Ascending aorta (tissue), 2 donors: ENCODE measurements at regions of chr7 and their contacts with region 1.

Region 1: DNA sequence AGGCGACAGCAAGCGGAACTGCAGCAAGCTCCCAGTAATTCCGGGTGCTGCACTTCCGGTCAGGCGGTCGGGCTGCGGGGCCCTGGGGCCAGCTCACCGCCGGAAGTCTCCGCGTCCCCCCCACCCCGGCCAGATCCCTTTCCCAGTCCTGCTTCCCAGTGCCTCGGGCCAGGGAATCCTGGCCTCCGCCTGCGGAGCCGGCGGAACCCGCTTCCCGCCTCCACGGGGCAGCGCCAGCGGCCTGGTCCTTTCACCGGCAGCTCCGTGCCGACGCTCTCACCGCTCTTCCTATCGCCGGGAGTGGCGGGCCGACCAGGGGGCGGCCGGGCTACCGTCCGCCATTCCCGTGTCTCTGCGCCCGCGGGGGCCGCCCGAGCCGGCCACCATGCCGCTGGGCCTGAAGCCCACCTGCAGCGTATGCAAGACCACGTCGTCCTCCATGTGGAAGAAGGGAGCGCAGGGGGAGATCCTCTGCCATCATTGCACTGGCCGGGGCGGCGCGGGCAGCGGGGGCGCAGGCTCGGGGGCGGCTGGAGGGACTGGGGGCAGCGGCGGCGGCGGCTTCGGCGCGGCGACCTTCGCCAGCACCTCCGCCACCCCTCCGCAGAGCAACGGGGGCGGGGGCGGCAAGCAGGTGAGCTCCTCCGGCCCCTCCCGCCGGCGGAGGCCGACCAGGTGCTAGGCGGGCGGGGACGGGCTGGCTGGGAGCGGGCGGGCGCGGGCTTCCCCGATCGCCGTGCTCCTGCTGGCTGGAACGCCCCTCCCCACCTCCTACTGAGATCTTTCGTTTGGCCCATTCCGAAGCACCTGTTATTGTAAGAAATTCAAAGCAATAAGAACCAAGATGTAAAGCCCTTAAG is at the start of gene GATAD1:
- DNase-seq: peak; percentile 62 to 93
- H3K4me3 ChIP-seq: peak within 1 kb of the TSS; percentile 92 to 98
- H3K27ac ChIP-seq: peak within 1 kb of the TSS; percentile 95 to 97
- H3K4me1 ChIP-seq: no peaks in the 10 kb centered on the region
- H3K27me3 ChIP-seq: no peaks in the 10 kb centered on the region
- CTCF ChIP-seq: peak; percentile 91 to 96 (median 92)
- total RNA-seq, gene GATAD1: 20.4 TPM

Region 2: GRCh38 chr7:92134271-92135051 is 313.1 kb before region 1 on chr7 and contains the start of gene CYP51A1:
- intact Hi-C with region 1: loop called (anchors 1 kb)
- DNase-seq: peak; percentile 77 to 97
- H3K4me3 ChIP-seq: peak within 1 kb of the TSS; percentile 67 to 88
- H3K27ac ChIP-seq: peak within 1 kb of the TSS; percentile 92 to 93
- H3K4me1 ChIP-seq: peaks cover 0 to 10% of the 10 kb centered on the region in 2 donors
- H3K27me3 ChIP-seq: no peaks in the 10 kb centered on the region
- CTCF ChIP-seq: no peak
- total RNA-seq, gene CYP51A1: 19.9 TPM

Region 3: DNA sequence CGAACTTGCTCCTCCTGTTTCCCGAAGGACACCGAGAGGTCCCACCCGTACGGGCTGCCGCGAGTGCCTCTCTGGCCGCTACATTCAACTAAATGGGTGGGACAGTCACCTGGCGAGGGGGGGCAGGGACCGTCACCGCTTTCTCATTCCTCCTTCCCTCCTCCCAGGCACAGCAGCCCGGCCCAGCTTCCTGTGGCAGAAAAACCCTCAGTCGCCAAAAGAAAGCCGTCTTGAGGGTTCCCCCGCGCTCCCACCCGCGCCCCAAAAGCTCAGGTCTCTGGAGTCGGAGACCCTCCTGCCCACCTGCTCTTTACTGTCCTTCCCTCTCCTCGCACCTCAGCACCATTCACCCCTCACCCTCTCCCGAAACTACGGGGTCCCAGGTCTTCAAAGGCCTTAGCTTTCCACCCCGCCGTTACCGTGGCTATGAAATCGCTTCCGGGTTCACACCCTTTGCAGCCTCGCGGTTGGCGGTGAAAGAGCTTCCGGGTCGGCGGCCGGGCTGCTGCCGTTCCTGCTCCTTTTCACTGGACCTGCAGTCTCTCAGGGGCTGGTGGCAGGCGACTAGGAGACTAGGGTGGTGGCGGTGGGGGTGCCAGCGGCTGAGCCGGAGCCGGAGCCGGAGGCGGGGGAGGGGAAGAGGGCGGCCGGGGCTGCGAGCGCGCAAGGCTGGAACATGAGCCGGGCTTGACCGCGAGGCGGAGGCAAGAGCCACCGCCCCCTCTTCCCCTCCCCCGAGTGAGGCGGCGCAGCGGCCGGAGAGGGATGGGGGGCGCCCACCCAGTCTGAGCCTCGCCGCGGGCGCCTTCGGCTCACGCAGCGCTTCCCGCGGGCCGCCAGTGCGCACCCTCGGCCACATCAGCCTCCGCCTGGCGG is 201.8 kb before region 1 on chr7 and contains the starts of genes ANKIB1 and KRIT1:
- intact Hi-C with region 1: loop called (anchors 2 kb)
- DNase-seq: peak; percentile 36 to 94
- H3K4me3 ChIP-seq: peak within 1 kb of the TSS; percentile 80 to 99
- H3K27ac ChIP-seq: peak within 1 kb of the TSS; percentile 90 to 94
- H3K4me1 ChIP-seq: peaks cover 0 to 25% of the 10 kb centered on the region in 2 donors
- H3K27me3 ChIP-seq: no peaks in the 10 kb centered on the region
- CTCF ChIP-seq: peak in 2 of 3 experiments; percentile 4 to 14
- total RNA-seq, gene ANKIB1: 27.4 TPM
- total RNA-seq, gene KRIT1: 66.1 TPM

Region 4: DNA sequence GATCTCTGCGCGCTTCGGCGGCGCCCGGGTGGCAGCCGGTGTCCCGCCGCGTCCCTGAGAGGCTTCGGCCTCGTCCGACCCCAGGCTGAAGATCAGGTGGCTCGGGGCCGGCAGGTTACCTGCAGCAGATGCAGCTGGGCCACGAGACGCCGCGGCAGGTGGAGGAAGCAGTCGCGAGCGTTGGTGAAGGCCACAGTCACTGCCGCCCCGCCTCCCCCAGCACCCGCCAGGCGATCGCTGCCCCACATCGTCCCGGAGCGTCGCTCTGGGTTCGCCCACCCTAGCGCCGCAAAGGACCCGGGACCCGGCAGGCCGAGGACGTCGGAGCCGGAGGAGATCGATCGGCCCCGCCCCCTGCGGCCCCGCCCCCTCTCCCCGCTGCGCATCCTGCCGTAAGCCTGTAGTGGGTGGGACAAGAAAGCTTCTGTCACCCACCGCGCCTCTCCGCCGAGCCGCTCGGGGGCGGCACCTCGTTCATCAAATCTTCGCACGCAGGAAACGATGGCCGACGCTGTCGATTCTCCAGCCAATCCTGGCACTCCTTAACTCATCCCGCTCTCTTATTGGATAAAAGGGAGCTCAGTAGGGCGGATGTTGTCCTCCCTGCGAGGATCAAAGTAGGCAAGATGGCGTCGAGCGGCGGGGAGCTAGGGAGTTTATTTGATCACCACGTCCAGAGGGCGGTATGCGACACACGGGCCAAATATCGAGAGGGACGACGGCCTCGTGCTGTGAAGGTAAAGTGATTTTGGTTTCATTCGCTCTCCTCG is 80.8 kb after region 1 on chr7 and contains the starts of genes PEX1 and RBM48:
- intact Hi-C with region 1: loop called (anchors 1 kb)
- DNase-seq: peak; percentile 90 to 98
- H3K4me3 ChIP-seq: peak within 1 kb of the TSS; percentile 86 to 94
- H3K27ac ChIP-seq: peak within 1 kb of the TSS; percentile 88 to 89
- H3K4me1 ChIP-seq: peaks cover 9 to 18% of the 10 kb centered on the region in 2 donors
- H3K27me3 ChIP-seq: no peaks in the 10 kb centered on the region
- CTCF ChIP-seq: peak in 2 of 3 experiments; percentile 36 to 48
- total RNA-seq, gene PEX1: 6.5 TPM
- total RNA-seq, gene RBM48: 2.2 TPM

Region 5: GRCh38 chr7:93231799-93232672 is 784.5 kb after region 1 on chr7 and contains the start of gene VPS50:
- intact Hi-C with region 1: loop called (anchors 10 kb)
- DNase-seq: peak; percentile 86 to 98
- H3K4me3 ChIP-seq: peak within 1 kb of the TSS; percentile 90 to 91
- H3K27ac ChIP-seq: peak within 1 kb of the TSS in 1 of 2 donors; percentile 29
- H3K4me1 ChIP-seq: peaks cover 0 to 6% of the 10 kb centered on the region in 2 donors
- H3K27me3 ChIP-seq: no peaks in the 10 kb centered on the region
- CTCF ChIP-seq: no peak
- total RNA-seq, gene VPS50: 6.9 TPM